ENCODE measurements at regions of chr1 and their contacts with region 1.

Region 1: DNA sequence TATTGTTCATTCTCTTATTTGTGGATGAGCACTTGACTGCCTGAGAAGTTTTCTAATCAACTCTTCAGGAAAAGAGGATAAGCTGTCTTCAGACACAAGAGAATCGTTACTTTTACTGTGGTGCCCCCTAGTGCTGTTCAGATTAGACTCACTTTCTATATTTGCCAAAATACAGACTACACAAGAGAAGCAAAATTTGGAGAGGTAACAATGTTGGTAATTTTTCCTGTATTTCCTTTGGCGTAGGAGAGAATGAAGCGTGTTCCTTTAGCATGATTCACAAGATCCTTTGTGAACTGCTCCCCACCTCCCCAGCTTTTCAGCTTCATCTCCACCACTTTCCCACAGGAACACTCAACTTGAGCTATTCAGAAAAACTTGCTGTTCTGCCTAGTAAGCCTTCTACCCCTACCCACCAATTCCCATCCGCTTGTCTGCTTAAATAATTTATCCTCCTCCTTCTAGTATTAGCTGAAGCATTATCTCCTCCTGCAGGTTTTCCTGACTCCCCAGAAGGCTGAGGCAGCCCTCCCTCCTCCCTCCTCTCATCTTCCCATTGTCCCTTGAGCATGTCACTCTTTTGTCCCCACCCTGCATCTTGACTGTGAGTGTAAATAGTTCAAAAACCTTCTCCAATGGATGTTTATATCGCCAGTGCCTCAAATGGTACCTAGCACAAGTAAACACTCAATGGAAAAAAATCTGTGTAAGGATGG is 4.5 kb downstream of the TNFSF4 start:
- DNase-seq: no peak
- H3K4me3 ChIP-seq: no peak overlapping the region
- H3K4me3 Mint-ChIP-seq: no peak overlapping the region
- H3K27ac ChIP-seq: no peak overlapping the region
- H3K27ac Mint-ChIP-seq: peak overlapping the region in 3 of 7 donors; percentile 3 to 88 (median 66)
- H3K4me1 ChIP-seq: peaks cover 41% of the 10 kb centered on the region
- H3K4me1 Mint-ChIP-seq: peaks cover 31 to 47% (median 37%) of the 10 kb centered on the region in 4 donors
- H3K27me3 ChIP-seq: no peaks in the 10 kb centered on the region
- H3K27me3 Mint-ChIP-seq: no peaks in the 10 kb centered on the region

Region 2: GRCh38 chr1:172449585-172450534 is 752.7 kb before region 1 on chr1:
- CTCF ChIA-PET with region 1: no interaction called
- POLR2A ChIA-PET with region 1: no interaction called
- intact Hi-C with region 1: loop called (anchors 2 kb)
- DNase-seq: peak; percentile 26 to 46 (median 33)
- H3K4me3 ChIP-seq: no peak overlapping the region
- H3K4me3 Mint-ChIP-seq: peak overlapping the region in 7 of 8 donors; percentile 10 to 69 (median 39)
- H3K27ac ChIP-seq: no peak overlapping the region
- H3K27ac Mint-ChIP-seq: peak overlapping the region in 3 of 7 donors; percentile 34 to 84 (median 70)
- H3K4me1 ChIP-seq: peaks cover 21% of the 10 kb centered on the region
- H3K4me1 Mint-ChIP-seq: peaks cover 5 to 32% (median 20%) of the 10 kb centered on the region in 4 donors
- H3K27me3 ChIP-seq: no peaks in the 10 kb centered on the region
- H3K27me3 Mint-ChIP-seq: no peaks in the 10 kb centered on the region

Region 3: DNA sequence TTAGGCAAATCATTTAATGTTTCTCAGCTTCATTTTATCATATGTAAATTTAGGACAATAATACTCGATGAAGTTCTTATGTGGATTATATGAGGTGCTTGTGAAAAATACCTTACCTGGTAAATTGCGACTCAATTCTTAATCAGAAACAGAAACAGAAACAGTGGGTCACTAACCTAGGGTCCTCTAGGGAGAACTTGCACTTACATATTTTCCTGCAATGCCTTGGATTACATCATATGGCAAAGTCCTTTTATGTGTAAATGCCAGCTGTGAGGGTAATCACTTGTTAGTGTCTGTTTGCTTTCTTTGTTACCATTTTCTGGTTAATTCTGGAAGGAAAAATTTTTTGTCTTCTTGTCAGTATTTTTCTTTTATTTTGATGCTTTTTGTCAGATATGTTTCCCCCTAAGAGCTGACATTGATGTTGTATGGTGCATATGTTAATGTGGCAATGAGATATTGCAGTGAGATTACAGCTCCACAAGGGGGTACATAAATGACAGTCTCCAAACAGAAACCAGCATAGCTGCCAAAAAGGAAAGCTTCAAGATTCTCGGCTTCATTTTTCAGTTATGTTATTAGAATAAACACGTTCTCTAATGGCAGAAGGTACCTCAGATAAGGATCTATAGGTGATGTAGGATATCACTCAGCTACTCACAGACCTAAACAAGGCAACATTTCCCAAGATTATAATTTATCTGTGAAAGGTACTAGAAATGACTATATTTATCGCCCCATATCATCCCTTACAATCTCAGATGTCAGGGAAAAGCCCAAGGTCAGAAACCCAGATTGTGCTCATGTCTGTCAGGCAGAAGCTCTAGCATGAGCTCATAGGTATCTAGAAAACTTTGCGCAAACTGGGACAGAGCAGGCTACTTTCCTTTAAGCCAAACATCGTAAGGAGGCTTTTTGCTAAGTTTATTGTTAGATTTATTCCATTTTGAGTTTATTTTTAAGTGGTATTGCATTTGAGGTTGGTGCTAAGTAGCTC is 423.8 kb before region 1 on chr1:
- CTCF ChIA-PET with region 1: interaction called, 27 read pairs
- POLR2A ChIA-PET with region 1: no interaction called
- intact Hi-C with region 1: loop called (anchors 1 kb)
- DNase-seq: peak in 4 of 5 donors; percentile 19 to 37 (median 28)
- H3K4me3 ChIP-seq: no peak overlapping the region
- H3K4me3 Mint-ChIP-seq: peak overlapping the region; percentile 42 to 83 (median 62)
- H3K27ac ChIP-seq: no peak overlapping the region
- H3K27ac Mint-ChIP-seq: peak overlapping the region in 4 of 7 donors; percentile 27 to 54 (median 40)
- H3K4me1 ChIP-seq: peaks cover 11% of the 10 kb centered on the region
- H3K4me1 Mint-ChIP-seq: peaks cover 7 to 18% (median 14%) of the 10 kb centered on the region in 4 donors
- H3K27me3 ChIP-seq: no peaks in the 10 kb centered on the region
- H3K27me3 Mint-ChIP-seq: no peaks in the 10 kb centered on the region

Region 4: DNA sequence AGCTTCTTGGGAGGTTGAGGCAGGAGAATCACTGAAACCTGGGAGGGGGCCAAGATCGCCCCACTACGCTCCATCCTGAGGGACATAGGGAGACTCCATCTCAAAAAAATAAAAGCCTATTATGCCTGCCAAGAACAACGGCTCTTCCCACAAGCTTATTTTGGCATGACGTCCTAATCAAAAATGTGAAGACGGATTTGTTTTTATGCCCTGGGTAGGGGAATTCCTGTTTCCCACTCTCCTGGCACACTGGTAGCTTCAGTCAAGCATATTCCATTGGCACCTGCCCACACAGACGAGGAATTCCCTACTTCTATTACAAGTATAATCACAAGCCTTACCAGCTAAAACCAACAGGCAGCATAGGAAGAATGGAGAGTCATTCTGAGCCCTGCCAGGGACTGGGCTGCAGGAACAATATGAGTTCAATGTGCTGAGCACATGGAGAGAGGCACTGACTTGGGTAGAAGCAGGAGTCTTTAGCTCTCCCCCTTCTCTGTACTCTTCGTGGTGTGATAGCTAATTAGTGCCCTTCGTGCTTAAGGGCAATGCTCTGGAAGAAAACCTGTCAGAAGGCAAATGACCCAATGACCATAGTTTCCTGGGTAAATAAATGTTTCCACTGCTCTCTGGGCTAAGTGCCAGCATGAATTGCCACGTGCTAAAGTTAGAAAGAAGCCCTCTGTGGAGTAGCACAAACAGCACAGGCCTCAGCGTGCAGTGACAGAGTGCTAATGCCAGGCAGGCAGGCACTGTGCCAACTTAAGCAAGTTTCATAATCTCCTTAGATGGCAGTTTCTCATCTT is 12.3 kb before region 1 on chr1:
- CTCF ChIA-PET with region 1: interaction called, 10 read pairs
- POLR2A ChIA-PET with region 1: interaction called, 5 read pairs
- intact Hi-C with region 1: no loop called
- DNase-seq: no peak
- H3K4me3 ChIP-seq: no peak overlapping the region
- H3K4me3 Mint-ChIP-seq: no peak overlapping the region
- H3K27ac ChIP-seq: no peak overlapping the region
- H3K27ac Mint-ChIP-seq: no peak overlapping the region
- H3K4me1 ChIP-seq: peaks cover 1% of the 10 kb centered on the region
- H3K4me1 Mint-ChIP-seq: peaks cover 0 to 2% (median under 1%) of the 10 kb centered on the region in 4 donors
- H3K27me3 ChIP-seq: no peaks in the 10 kb centered on the region
- H3K27me3 Mint-ChIP-seq: no peaks in the 10 kb centered on the region

Region 5: DNA sequence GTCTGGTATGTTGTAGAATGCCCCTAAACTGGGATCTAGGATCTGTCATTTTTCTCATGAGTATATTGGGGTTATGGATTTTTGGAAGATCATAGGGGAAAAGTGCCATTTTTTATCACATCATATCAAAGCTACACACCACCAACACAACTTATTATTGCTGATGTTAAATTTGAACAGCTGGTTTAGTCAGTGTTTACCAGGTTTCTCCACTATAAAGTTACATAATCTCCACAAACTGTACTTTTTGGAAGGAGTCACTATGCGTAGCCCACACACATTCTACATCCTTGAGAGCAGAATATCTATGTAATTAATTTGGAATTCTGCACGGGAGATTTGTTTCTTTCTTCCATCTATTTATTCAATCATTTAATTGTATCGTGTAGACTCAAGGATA is 784.4 kb after region 1 on chr1:
- CTCF ChIA-PET with region 1: no interaction called
- POLR2A ChIA-PET with region 1: no interaction called
- intact Hi-C with region 1: no loop called
- DNase-seq: no peak
- H3K4me3 ChIP-seq: no peak overlapping the region
- H3K4me3 Mint-ChIP-seq: no peak overlapping the region
- H3K27ac ChIP-seq: no peak overlapping the region
- H3K27ac Mint-ChIP-seq: peak overlapping the region in 2 of 7 donors; percentile 35 to 72
- H3K4me1 ChIP-seq: no peaks in the 10 kb centered on the region
- H3K4me1 Mint-ChIP-seq: peaks cover 5 to 12% (median 7%) of the 10 kb centered on the region in 4 donors
- H3K27me3 ChIP-seq: no peaks in the 10 kb centered on the region
- H3K27me3 Mint-ChIP-seq: no peaks in the 10 kb centered on the region

Region 6: GRCh38 chr1:174743654-174744561 is 1541.3 kb after region 1 on chr1:
- CTCF ChIA-PET with region 1: no interaction called
- POLR2A ChIA-PET with region 1: no interaction called
- intact Hi-C with region 1: loop called (anchors 10 kb)
- DNase-seq: peak in 4 of 5 donors; percentile 42 to 47 (median 44)
- H3K4me3 ChIP-seq: no peak overlapping the region
- H3K4me3 Mint-ChIP-seq: no peak overlapping the region
- H3K27ac ChIP-seq: no peak overlapping the region
- H3K27ac Mint-ChIP-seq: peak overlapping the region in 2 of 7 donors; percentile 60
- H3K4me1 ChIP-seq: no peaks in the 10 kb centered on the region
- H3K4me1 Mint-ChIP-seq: peaks cover 0 to 7% (median 0%) of the 10 kb centered on the region in 4 donors
- H3K27me3 ChIP-seq: no peaks in the 10 kb centered on the region
- H3K27me3 Mint-ChIP-seq: no peaks in the 10 kb centered on the region

Measured in CD4-positive, alpha-beta memory T cell (primary cell).